Posterior vena cava (tissue), 2 donors: ENCODE measurements at regions of chr12 and their contacts with region 1.

Region 1: GRCh38 chr12:30795410-30796312 is 40.9 kb upstream of the CAPRIN2 start:
- DNase-seq: peak; percentile 91

Region 2: GRCh38 chr12:30756074-30756473 is 39.6 kb before region 1 on chr12:
- intact Hi-C with region 1: loop called in 1 of 2 experiments (anchors 2 kb)
- DNase-seq: no peak